GM13977 (cell line): ENCODE measurements at regions of chr4 and their contacts with region 1.

Region 1: DNA sequence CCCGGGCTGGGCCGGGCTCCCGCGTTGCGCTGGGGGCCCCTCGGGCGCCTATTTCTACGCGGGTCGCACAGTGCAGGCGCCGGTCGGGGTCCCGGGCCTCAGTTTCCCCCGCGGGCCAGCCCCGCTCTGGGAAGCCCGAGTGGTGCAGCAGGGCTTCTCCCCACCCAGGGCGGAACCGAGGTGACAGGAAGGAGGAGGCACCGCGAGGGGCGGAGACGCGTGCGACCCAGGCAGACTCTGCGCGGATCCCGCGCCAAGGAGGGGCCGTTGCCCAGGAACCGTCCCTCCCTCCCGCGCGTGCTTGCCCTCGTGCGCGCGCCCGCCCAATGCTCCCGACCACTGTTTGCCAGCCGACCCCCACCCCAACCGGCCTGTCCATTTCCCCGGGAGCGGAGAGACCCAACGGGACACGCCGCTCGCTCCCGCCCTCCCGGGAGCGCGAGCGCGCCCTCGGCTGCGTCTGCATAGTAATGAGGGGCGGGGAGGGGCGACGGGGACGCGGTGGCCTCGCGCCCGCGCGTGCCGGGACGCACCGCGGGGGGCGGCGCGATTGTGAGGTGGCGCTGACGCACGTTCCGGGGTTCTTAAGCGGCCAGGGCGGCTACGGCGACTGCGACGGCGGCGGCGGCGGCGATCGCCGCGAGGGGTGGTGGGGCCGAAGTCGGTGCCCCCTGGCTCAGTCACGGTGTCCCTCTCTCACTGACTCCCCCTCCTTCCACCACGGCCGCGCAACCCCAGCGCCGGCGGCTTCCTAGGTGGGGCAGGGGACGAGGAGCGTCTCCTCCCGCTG is at the start of gene CPEB2:
- DNase-seq: peak; percentile 92
- CTCF ChIP-seq: no peak

Region 2: DNA sequence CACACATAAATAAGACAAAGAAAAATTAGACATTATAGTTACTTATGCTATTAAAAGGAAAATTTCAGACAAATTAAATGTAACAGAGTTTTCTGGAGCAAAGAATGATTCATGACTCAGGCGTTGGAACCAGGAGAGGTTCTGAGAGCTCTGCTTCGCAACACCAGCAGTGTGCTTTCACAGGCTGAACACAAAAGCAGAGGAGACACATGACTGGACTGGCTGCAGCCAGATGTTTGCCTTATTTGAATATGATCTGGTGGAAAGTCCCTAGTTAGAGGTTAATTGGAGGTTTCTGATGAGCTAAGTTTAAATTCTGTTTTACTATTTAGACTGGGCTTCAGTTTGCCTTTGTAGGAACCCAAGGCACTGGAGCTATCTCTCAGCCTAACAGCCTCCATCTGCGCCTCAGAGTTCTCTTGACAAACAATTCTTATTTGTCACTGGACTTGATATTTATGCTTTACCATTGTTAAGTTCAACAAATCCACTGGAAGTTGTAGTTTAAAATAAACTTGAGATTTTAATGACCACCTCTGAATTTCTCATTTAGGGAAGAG is 1390.7 kb before region 1 on chr4:
- in situ Hi-C with region 1: loop called (anchors 25 kb)
- DNase-seq: peak; percentile 52
- CTCF ChIP-seq: no peak

Region 3: GRCh38 chr4:14168919-14169318 is 833.1 kb before region 1 on chr4:
- in situ Hi-C with region 1: loop called (anchors 25 kb)
- DNase-seq: no peak
- CTCF ChIP-seq: no peak

Region 4: DNA sequence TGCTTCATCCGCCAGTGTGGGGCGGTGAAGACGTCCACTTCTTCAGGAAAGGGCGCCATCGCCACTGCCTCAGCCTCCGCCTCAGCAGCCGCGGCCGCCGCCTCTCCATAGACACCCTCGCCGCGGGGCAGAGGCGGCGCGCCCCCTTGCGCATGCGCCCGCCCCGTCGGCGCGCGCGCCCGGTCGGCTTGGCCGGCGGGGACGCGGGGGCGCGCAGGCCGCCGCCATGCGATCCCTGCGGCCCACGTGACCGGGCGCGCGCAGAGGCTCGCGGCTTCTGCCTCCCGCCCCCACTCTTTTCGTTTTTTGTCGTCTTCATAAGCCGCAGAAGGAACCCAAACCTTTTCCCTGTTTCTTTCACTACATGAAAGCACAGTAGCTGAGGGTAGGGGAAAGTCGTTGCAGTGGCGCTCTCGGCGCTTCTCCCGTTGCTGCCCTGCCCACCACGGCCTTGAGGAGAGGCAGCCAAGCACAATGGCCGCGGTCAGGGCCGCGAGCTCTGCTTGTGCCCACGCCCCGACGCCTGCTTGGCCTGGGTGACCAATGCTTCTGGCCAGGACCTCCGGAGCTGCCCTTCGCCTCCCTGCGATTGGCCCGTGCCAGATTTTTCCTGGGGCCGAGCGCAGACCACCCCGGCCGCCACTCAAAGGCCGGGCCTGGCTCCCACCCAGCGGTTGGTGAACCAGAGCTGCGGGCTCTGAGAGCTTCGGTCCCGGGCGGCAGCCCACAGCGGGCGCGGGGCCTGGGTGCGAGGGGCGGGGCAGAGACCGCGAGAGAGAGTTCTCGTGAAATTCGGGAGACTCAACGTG is 653.4 kb after region 1 on chr4 and contains the start of gene FBXL5:
- in situ Hi-C with region 1: loop called (anchors 25 kb)
- DNase-seq: peak; percentile 97
- CTCF ChIP-seq: no peak

Region 5: DNA sequence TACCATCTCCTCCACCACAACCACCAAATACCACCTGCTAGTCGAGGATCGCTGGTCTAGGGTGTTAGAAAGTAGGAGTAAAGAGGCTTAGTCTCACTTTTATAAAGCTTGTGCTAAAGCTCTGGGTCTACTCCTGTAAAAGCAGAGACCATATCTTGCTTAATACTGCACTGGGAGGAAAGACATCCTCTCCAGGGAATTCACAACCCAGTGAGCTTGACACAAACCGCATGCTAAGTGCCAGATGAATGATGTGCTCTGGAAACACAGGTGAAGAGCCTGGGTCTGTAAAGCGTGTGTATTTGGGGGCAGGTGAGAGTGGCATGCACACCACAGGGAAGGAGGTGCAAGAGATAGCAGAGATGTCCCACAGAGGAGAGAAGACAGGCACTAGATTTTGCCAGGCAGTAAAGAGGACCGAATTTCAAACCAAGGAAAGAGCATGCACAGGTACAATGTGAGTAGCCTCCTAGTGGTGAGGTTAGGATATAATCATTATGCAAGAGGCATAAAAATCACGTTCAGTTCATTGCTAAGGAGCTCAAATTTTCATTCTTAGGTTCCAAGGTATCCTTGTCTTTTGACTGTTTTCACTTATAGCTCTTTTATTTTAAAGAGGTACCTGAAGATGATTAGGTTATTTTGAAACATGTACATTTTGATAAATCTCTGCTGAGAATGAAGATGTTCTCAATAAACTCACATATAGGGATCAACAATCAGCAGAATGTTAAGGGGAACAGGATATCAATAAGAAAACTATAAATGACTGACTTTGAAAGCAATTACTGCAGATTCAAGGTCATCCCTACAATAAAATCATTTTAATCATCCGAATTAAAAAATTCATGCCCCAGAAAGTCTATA is 1203.5 kb after region 1 on chr4:
- in situ Hi-C with region 1: loop called (anchors 25 kb)
- DNase-seq: peak; percentile 40
- CTCF ChIP-seq: peak; percentile 60